Spleen (tissue), 13 donors: ENCODE measurements at regions of chr1 and their contacts with region 1.

Region 1: GRCh38 chr1:65419681-65420589 is 533 bp upstream of the LEPR start:
- DNase-seq: peak; percentile 100
- H3K4me3 ChIP-seq: peak overlapping the region; percentile 65 to 93 (median 84)
- H3K27ac ChIP-seq: peak overlapping the region; percentile 93 to 98 (median 96)
- H3K4me1 ChIP-seq: peaks cover 14 to 47% (median 36%) of the 10 kb centered on the region in 6 donors
- H3K27me3 ChIP-seq: no peaks in the 10 kb centered on the region
- CTCF ChIP-seq: peak in 3 of 11 experiments; percentile 11 to 50 (median 21)
- POLR2A ChIP-seq: no peak

Region 2: DNA sequence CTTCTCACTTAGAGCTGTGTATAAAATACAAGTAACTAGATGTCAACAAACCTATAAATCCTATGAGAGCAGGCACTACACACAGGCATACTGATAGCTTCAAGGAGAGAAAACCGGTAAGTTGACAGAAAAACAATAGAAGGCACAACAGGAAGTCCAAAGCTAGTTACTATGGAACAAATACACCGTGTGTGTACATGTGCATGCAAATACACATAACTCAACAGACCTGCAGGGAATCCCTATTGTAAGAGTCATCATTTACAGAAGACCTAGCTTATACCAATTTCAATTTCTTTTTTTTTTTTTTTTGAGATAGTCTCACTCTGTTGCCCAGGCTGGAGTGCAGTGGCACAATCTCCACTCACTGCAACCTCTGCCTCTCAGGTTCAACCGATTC is 479.9 kb before region 1 on chr1:
- intact Hi-C with region 1: no loop called
- DNase-seq: no peak
- H3K4me3 ChIP-seq: no peak overlapping the region
- H3K27ac ChIP-seq: peak overlapping the region in 2 of 8 donors; percentile 3 to 15
- H3K4me1 ChIP-seq: peaks cover 29 to 98% (median 76%) of the 10 kb centered on the region in 6 donors
- H3K27me3 ChIP-seq: no peaks in the 10 kb centered on the region
- CTCF ChIP-seq: no peak
- POLR2A ChIP-seq: no peak

Region 3: DNA sequence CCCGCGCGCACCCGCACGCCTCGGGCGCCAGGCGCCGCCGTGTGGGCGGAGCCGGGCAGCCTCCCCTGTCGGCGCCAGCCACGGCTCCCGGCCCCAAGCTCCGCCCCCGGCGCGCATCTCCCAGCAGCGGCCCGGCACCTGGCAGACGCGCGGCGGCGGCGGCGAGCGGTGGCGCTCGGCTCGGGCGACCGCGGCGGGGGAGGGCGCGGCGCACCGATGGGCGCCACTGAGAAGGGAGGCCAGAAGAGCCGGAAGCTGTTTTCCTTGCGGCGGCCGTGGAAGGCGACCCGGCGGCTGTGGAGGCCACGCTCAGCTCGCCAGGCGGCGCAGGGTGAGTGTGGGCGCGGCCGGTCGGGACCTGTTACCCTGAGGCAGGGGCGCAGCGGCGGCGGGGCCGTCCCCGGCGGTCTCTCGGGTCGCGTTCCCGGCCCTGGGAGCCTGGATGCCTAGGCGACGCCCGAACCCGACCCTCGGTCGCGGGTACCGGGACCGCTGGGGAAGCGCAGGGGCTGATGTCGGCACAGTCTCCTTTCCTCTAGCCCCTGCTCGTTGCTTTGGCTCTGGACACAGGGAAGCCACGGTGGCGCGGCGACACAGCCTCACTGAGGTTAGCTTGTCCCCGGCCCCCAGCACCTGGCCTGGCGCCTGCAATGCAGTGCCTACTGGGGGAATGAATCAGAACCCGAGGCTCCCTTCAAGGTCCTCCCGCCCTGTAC is 165.5 kb before region 1 on chr1:
- intact Hi-C with region 1: loop called (anchors 10 kb)
- DNase-seq: peak; percentile 95
- H3K4me3 ChIP-seq: peak overlapping the region; percentile 72 to 86 (median 78)
- H3K27ac ChIP-seq: peak overlapping the region in 7 of 8 donors; percentile 38 to 76 (median 68)
- H3K4me1 ChIP-seq: peaks cover 5 to 23% (median 20%) of the 10 kb centered on the region in 6 donors
- H3K27me3 ChIP-seq: peaks cover 0 to 22% (median 0%) of the 10 kb centered on the region in 7 donors
- CTCF ChIP-seq: peak in 3 of 11 experiments; percentile 11 to 24 (median 22)
- POLR2A ChIP-seq: no peak

Region 4: GRCh38 chr1:65490231-65491009 is 70.5 kb after region 1 on chr1:
- intact Hi-C with region 1: no loop called
- DNase-seq: no peak
- H3K4me3 ChIP-seq: no peak overlapping the region
- H3K27ac ChIP-seq: no peak overlapping the region
- H3K4me1 ChIP-seq: no peaks in the 10 kb centered on the region
- H3K27me3 ChIP-seq: no peaks in the 10 kb centered on the region
- CTCF ChIP-seq: no peak
- POLR2A ChIP-seq: no peak

Region 5: GRCh38 chr1:65581119-65581518 is 161.2 kb after region 1 on chr1:
- intact Hi-C with region 1: no loop called
- DNase-seq: no peak
- H3K4me3 ChIP-seq: no peak overlapping the region
- H3K27ac ChIP-seq: no peak overlapping the region
- H3K4me1 ChIP-seq: no peaks in the 10 kb centered on the region
- H3K27me3 ChIP-seq: no peaks in the 10 kb centered on the region
- CTCF ChIP-seq: no peak
- POLR2A ChIP-seq: no peak